Panc1 (cell line): ENCODE measurements at regions of chr14 and their contacts with region 1.

Region 1: GRCh38 chr14:90126260-90126659 is 64.5 kb downstream of the KCNK13 start:
- DNase-seq: no peak
- ATAC-seq: no peak
- H3K4me3 ChIP-seq: no peak overlapping the region
- H3K27ac ChIP-seq: no peak overlapping the region
- H3K4me1 ChIP-seq: no peaks in the 10 kb centered on the region
- H3K27me3 ChIP-seq: no peaks in the 10 kb centered on the region
- CTCF ChIP-seq: no peak

Region 2: DNA sequence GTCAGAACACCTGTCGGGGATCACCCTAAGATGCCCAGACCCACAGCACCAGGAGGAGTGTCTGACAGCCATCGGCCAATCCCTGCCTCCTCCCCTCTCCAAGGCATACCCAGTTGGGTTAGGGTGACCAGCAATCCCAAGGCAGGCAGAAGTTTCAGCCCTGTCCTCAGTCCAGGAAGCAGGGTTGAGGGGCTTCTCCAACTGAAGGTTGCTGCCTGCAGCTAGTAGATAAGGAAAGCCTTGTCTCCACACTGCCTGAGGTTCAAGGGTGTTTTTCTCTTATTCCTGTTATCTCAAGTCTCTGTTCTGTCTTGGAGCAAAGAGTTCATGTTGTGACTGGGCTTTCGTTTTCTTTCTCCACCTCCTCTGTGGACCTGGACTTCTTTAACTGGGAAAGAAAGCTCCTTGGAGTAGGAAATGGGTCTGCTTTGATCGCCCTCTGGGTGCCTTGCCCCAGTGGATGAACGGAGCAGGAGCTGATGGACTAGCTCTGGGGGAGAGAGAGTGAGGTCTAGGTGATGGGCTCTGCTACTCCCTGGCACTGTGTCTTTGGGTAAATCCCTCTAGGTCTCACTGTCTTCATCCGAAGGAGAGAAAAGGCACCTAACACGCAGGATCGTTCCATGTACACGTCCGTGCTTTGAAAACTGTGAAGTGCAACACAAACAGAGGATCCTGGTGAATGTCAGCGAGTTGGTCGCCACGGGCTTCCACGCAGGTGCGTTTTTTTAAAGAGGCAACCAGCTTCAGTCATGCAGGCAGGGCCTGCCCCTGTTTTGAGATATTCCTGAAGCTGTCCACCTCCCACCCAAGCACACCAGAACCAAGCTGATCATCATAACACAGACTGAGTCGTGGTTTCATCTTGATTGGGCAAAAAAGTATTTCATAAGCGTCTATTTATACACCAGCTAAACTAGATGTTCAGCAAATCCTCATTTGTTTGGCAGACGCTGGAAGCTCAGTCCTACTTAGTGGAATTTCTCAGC is 656.8 kb before region 1 on chr14:
- CTCF ChIA-PET with region 1: no interaction called
- POLR2A ChIA-PET with region 1: interaction called, 17 read pairs
- in situ Hi-C with region 1: no loop called
- intact Hi-C with region 1: no loop called
- DNase-seq: no peak
- ATAC-seq: no peak
- H3K4me3 ChIP-seq: no peak overlapping the region
- H3K27ac ChIP-seq: no peak overlapping the region
- H3K4me1 ChIP-seq: no peaks in the 10 kb centered on the region
- H3K27me3 ChIP-seq: no peaks in the 10 kb centered on the region
- CTCF ChIP-seq: no peak

Region 3: GRCh38 chr14:90399541-90400444 is 273.5 kb after region 1 on chr14:
- CTCF ChIA-PET with region 1: no interaction called
- POLR2A ChIA-PET with region 1: no interaction called
- in situ Hi-C with region 1: no loop called
- intact Hi-C with region 1: no loop called
- DNase-seq: peak; percentile 73
- ATAC-seq: peak; percentile 79
- H3K4me3 ChIP-seq: peak overlapping the region; percentile 82 to 92; a peak in 3 of 4 replicates
- H3K27ac ChIP-seq: no peak overlapping the region; the same call in 1 of the 2 replicates
- H3K4me1 ChIP-seq: peaks cover 11% of the 10 kb centered on the region
- H3K27me3 ChIP-seq: no peaks in the 10 kb centered on the region
- CTCF ChIP-seq: peak; percentile 98